Activated CD8-positive, alpha-beta T cell treated with anti-CD3 and anti-CD28 coated beads for 36 hours (primary cell): ENCODE measurements at regions of chr2 and their contacts with region 1.

Region 1: DNA sequence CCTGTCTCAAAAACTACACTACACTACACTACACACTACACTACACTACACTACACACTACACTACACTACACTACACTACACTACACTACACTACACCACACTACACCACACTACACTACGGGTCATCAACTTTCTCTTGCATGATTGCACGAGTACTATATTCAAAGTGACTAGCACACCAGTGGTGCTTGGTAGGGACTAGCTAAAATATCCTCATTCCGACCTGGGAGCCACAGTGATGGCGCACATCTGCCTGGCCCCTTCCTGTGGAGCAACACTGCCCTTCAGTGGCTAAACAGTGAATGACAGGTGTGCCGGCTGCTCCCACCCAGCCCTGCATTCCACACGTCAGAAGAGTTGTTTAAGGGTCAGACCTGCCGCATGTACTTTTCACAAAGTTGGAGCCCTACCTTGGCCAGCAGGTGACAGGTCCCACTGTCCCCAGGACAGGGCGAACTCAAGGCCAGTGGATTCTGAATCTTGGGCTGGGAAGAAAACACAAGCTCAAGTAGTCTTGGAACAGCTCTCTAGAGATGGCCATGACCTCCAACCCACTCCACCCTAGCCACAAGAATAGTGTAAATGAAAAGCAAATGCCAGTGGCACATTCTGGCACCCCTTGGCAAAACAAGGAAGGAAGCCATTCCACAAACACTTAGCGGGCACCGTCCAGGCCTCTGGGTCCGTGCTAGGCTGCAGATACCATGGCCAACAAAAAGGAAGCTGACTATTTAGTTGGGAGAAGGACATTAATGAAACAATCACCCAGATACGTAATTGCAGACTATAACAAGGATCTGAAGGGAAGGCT is 79.7 kb upstream of the MSH2 start:
- DNase-seq: peak; percentile 76
- ATAC-seq: peak; percentile 100
- H3K4me3 Mint-ChIP-seq: no peak overlapping the region
- H3K27ac Mint-ChIP-seq: no peak overlapping the region
- H3K4me1 Mint-ChIP-seq: no peaks in the 10 kb centered on the region
- H3K27me3 Mint-ChIP-seq: peaks cover 2% of the 10 kb centered on the region
- CTCF ChIP-seq: peak; percentile 92

Region 2: GRCh38 chr2:47303341-47304148 is 19.7 kb before region 1 on chr2:
- CTCF ChIA-PET with region 1: interaction called, 14 read pairs
- POLR2A ChIA-PET with region 1: no interaction called
- intact Hi-C with region 1: no loop called
- DNase-seq: no peak
- ATAC-seq: no peak
- H3K4me3 Mint-ChIP-seq: no peak overlapping the region
- H3K27ac Mint-ChIP-seq: no peak overlapping the region
- H3K4me1 Mint-ChIP-seq: peaks cover 9% of the 10 kb centered on the region
- H3K27me3 Mint-ChIP-seq: peaks cover 4% of the 10 kb centered on the region
- CTCF ChIP-seq: no peak

Region 3: GRCh38 chr2:47344890-47345589 is 21.8 kb after region 1 on chr2:
- CTCF ChIA-PET with region 1: no interaction called
- POLR2A ChIA-PET with region 1: no interaction called
- intact Hi-C with region 1: no loop called
- DNase-seq: no peak
- ATAC-seq: no peak
- H3K4me3 Mint-ChIP-seq: no peak overlapping the region
- H3K27ac Mint-ChIP-seq: no peak overlapping the region
- H3K4me1 Mint-ChIP-seq: peaks cover 7% of the 10 kb centered on the region
- H3K27me3 Mint-ChIP-seq: peaks cover 18% of the 10 kb centered on the region
- CTCF ChIP-seq: no peak

Region 4: DNA sequence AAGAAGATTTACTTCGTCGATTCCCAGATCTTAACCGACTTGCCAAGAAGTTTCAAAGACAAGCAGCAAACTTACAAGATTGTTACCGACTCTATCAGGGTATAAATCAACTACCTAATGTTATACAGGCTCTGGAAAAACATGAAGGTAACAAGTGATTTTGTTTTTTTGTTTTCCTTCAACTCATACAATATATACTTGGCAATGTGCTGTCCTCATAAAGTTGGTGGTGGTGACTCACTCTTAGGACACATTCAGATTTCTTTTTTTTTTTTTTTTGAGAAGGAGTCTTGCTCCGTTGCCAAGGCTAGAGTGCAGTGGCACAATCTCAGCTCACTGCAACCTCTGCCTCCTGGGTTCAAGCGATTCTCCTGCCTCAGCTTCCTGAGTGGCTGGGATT is 106.6 kb after region 1 on chr2:
- CTCF ChIA-PET with region 1: no interaction called
- POLR2A ChIA-PET with region 1: no interaction called
- intact Hi-C with region 1: no loop called
- DNase-seq: no peak
- ATAC-seq: no peak
- H3K4me3 Mint-ChIP-seq: no peak overlapping the region
- H3K27ac Mint-ChIP-seq: no peak overlapping the region
- H3K4me1 Mint-ChIP-seq: no peaks in the 10 kb centered on the region
- H3K27me3 Mint-ChIP-seq: no peaks in the 10 kb centered on the region
- CTCF ChIP-seq: no peak